ENCODE measurements at regions of chr1 and their contacts with region 1.

Region 1: DNA sequence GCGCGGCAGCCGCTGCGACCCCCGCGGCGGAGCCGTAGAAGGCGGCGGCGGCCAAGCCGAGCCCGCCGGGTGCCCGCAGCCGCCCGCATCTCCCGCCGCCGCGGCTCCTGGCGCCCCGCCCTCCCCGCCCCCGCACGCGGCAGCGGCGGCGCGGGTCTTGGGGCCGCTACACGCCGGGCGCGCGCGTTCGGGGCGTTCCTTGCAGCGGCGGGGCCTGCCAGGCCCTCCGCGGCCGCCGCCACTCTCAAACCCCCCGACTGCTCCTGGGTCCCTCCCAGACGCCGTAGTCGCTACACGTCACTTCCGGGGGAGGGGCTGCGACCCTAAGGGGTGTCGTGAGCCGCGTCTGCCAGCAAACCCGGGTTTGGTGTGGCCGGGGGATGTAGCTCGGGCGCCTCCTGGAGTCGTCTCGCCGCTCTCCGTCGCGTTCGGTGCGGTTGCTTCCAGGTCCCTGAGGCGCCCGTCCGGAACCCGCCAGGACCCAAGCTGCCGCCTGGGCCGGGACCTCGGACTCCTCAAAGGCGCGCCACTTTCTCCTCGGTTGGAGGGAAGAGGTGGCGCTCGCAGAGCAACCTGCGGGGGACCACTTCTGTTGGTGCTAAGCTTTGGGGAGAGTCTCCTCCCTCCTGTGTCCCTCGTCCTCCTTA is at the start of gene ELK4:
- DNase-seq: peak; percentile 99
- H3K4me3 Mint-ChIP-seq: peak within 1 kb of the TSS; percentile 88
- H3K27ac Mint-ChIP-seq: peak within 1 kb of the TSS; percentile 96
- H3K4me1 Mint-ChIP-seq: peaks cover 37% of the 10 kb centered on the region
- H3K27me3 Mint-ChIP-seq: peaks cover 4% of the 10 kb centered on the region
- total RNA-seq, gene ELK4: 80.6 to 83.0 TPM

Region 2: DNA sequence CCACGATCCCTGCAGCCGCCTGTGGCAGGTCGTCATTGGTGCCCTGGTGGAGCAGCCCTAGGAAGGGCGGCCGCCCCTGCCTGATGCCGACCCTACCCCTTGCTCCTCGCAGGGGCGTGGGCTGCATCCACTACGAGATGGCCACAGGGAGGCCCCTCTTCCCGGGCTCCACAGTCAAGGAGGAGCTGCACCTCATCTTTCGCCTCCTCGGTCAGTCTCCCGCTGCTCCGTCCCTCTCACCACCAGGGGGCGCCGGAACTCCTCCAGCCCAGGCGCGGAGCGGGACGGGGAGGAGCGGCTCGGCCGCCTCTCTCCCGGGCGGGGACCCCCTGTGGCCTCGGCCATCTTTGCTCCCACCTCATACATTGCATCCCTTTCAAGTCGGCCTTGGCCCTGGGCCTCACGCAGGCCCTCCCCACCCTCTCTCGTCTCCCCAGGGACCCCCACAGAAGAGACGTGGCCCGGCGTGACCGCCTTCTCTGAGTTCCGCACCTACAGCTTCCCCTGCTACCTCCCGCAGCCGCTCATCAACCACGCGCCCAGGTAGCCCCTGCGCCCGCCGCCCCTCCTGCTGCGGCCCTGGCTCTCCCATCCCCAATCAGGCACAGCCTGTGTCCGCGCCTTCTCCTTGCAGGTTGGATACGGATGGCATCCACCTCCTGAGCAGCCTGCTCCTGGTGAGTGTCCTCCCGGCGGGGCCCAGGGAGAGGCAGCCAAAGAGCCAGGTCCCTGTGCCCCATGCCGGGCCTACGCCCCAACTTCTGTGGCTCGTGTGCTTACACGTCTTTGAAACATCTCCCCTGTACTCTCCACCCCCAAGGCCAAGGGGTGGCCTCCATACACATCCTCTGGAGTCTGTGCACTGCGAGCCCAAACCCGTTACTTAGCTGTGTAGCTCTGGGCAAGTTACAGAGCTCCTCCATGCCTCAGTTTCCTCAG is 102.7 kb before region 1 on chr1:
- CTCF ChIA-PET with region 1: interaction called, 18 read pairs
- POLR2A ChIA-PET with region 1: interaction called, 8 read pairs
- DNase-seq: peak; percentile 81
- H3K4me3 Mint-ChIP-seq: no peak overlapping the region
- H3K27ac Mint-ChIP-seq: no peak overlapping the region
- H3K4me1 Mint-ChIP-seq: peaks cover 4% of the 10 kb centered on the region
- H3K27me3 Mint-ChIP-seq: peaks cover 4% of the 10 kb centered on the region

Region 3: DNA sequence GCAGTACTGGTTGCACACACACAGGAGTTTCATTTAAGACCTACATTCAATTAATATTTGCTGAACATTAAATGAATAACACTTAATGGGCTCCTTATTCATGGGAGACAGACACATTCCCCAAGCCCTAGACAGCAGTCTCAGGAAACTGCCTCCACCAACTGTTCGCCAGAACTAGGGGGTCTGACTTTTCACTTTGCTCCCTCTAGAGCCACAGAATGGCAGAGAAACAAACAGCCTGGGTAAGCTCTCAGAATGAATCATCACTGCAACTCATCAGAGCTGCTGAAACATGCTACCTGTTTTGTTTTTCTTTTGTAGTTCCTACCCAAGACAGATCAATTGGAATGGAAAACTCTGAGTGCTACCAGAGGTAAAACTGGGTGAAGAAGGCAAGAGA is 31.8 kb before region 1 on chr1:
- CTCF ChIA-PET with region 1: interaction called, 257 read pairs
- POLR2A ChIA-PET with region 1: interaction called, 165 read pairs
- DNase-seq: no peak
- H3K4me3 Mint-ChIP-seq: no peak overlapping the region
- H3K27ac Mint-ChIP-seq: peak overlapping the region; percentile 41
- H3K4me1 Mint-ChIP-seq: peaks cover 32% of the 10 kb centered on the region
- H3K27me3 Mint-ChIP-seq: no peaks in the 10 kb centered on the region

Region 4: GRCh38 chr1:205645519-205645918 is 13.7 kb after region 1 on chr1:
- CTCF ChIA-PET with region 1: interaction called, 7 read pairs
- POLR2A ChIA-PET with region 1: interaction called, 12 read pairs
- DNase-seq: no peak
- H3K4me3 Mint-ChIP-seq: no peak overlapping the region
- H3K27ac Mint-ChIP-seq: no peak overlapping the region
- H3K4me1 Mint-ChIP-seq: no peaks in the 10 kb centered on the region
- H3K27me3 Mint-ChIP-seq: peaks cover 4% of the 10 kb centered on the region

Region 5: DNA sequence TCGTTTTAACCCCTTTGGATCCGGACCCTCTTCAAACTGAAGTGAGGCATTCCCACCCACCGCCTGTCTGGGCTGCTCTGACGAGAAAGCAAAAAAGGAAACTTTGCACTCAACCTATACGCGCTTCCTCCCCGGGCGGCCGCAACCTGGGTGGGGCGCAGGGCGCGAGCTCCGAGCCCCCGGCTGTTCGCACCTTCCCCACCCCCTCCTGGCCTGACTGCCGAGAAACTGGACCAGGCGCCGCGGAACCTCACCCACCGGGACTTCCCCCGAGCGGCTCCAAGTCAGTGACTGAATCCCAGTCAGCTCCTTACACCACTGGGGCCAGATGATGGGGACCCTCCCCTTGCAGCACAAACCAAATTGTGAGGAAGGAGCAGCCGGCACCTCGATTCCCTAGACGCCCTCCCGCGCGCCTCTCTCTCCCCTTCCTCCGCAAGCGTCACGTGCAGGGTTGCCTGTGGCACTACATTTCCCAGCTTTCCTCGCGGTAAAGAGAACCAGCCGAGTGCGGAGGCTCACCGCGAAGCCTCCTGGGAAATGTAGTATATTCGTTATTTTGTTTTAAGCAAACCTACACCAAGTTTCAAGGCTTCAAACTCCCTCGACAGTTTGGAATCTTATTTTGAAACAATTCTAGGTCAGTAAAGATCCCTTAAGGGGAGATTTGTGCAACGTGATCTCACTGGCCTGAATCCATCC is 143.3 kb after region 1 on chr1 and contains the start of gene RAB29:
- CTCF ChIA-PET with region 1: no interaction called
- POLR2A ChIA-PET with region 1: interaction called, 21 read pairs
- DNase-seq: peak; percentile 92
- H3K4me3 Mint-ChIP-seq: peak within 1 kb of the TSS; percentile 90
- H3K27ac Mint-ChIP-seq: peak within 1 kb of the TSS; percentile 87
- H3K4me1 Mint-ChIP-seq: peaks cover 57% of the 10 kb centered on the region
- H3K27me3 Mint-ChIP-seq: no peaks in the 10 kb centered on the region
- total RNA-seq, gene RAB29: 67.6 to 72.3 TPM

Measured in activated CD4-positive, alpha-beta memory T cell treated with anti-CD3 and anti-CD28 coated beads, Interleukin-2, amount 10 ng/mL, durations not matched to agents 7 days and 5 days (primary cell).